Activated naive CD4-positive, alpha-beta T cell treated with anti-CD3 and anti-CD28 coated beads, Interleukin-2, amount 10 ng/mL, durations not matched to agents 7 days and 5 days (primary cell): ENCODE measurements at regions of chr3 and their contacts with region 1.

Region 1: GRCh38 chr3:195558602-195559001 is 15.5 kb upstream of the PPP1R2 start:
- DNase-seq: peak; percentile 63
- H3K4me3 Mint-ChIP-seq: no peak overlapping the region
- H3K27ac Mint-ChIP-seq: no peak overlapping the region
- H3K4me1 Mint-ChIP-seq: peaks cover 35% of the 10 kb centered on the region
- H3K27me3 Mint-ChIP-seq: peaks cover 4% of the 10 kb centered on the region

Region 2: DNA sequence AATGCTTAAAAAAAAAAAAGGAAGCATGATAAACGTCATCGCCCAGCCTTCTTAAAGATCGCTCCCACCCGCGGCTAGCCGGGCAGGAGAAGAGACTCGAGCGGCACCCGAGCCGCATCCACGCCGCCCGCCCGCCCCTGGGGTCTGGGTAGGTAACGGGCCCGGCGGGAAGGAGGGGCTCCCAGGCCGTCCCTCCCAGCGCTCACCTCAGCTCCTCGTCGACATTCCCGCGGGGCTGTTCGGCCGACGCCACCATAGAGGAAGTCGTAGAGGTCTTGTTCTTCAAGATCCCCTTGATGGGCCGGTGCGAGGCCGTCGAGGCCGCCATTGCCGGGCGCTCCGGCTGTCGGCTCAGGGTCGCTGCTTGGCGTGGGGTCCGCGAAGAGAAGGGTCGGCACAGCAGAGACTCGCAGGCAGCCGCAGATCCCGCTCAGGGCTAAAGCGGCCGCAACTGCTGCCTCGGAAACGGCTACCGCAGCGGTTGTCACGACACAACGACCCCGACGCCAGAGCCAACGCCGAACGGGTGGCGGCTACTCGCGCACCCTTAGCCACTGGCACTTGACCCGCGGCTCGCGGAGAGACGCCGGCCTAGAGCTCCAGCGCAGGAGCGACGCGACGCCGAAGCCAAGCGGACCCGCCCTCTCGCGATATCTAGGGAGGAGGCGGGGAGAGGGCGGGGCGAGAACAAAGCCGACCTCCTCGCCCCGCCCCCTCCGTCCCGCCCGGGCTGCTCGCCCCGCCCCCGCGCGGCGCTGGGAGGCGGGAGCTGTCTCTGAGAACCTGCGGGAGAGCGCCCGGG is 15.7 kb before region 1 on chr3 and contains the start of gene PPP1R2:
- CTCF ChIA-PET with region 1: interaction called, 13 read pairs
- DNase-seq: peak; percentile 91
- H3K4me3 Mint-ChIP-seq: peak within 1 kb of the TSS; percentile 83
- H3K27ac Mint-ChIP-seq: peak within 1 kb of the TSS; percentile 96
- H3K4me1 Mint-ChIP-seq: peaks cover 73% of the 10 kb centered on the region
- H3K27me3 Mint-ChIP-seq: no peaks in the 10 kb centered on the region

Region 3: DNA sequence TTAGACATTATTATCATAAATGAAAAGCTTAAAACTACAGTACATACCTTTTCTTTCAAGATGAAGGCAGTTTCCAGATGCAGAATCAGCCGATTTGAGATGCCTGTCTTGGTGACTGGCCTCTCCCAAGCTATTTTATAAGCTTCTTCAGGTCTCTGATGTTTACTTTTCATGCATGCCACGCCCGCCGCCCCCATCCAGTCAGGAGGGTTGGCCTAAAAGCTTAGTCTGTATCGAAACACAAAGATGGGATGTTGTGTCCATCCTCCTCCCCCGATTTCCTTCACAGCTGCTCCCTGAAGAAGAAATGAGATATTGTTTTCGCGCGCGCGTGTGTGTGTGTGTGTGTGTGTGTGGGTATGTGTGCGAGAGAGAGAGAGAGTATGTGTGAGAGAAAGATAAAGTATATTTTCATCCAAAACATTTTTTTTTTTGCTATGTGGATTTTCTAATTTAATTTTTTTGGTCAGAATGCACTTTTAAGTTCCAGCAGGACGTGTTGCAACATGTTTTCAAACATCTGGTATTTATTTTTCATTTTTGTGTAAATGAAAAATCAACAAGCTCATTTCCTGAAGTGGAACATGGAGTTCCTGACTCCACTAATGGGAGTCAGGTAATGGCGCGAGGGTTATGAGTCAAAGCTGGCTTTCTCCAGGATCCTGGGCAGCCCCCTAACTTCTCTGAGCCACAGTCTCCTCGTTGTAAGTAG is 25.4 kb after region 1 on chr3 and contains the start of gene APOD:
- CTCF ChIA-PET with region 1: no interaction called
- DNase-seq: no peak
- H3K4me3 Mint-ChIP-seq: no peak within 1 kb of the TSS
- H3K27ac Mint-ChIP-seq: no peak within 1 kb of the TSS
- H3K4me1 Mint-ChIP-seq: peaks cover 10% of the 10 kb centered on the region
- H3K27me3 Mint-ChIP-seq: peaks cover 6% of the 10 kb centered on the region